GM18951 (cell line): ENCODE measurements at regions of chr14 and their contacts with region 1.

Region 1: DNA sequence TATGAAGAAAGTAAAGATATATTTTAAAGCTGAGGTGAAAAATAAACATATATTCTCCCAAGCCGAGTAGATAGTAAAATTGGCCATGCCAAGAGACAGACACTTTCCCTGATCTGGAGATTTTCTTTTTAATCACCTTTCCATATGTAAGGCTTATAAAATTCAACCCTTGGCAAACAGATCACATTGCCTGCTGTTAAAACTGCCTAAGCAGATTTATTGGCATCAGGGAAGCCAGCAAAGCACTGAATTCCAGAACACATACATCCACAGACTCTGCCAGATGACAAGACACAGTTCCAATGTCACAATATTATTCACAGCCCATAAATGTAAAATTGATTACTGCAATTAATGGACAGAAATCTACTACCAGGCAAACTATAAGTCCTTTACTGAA is 78.2 kb upstream of the GARIN2 start:
- POLR2A ChIP-seq: no peak

Region 2: DNA sequence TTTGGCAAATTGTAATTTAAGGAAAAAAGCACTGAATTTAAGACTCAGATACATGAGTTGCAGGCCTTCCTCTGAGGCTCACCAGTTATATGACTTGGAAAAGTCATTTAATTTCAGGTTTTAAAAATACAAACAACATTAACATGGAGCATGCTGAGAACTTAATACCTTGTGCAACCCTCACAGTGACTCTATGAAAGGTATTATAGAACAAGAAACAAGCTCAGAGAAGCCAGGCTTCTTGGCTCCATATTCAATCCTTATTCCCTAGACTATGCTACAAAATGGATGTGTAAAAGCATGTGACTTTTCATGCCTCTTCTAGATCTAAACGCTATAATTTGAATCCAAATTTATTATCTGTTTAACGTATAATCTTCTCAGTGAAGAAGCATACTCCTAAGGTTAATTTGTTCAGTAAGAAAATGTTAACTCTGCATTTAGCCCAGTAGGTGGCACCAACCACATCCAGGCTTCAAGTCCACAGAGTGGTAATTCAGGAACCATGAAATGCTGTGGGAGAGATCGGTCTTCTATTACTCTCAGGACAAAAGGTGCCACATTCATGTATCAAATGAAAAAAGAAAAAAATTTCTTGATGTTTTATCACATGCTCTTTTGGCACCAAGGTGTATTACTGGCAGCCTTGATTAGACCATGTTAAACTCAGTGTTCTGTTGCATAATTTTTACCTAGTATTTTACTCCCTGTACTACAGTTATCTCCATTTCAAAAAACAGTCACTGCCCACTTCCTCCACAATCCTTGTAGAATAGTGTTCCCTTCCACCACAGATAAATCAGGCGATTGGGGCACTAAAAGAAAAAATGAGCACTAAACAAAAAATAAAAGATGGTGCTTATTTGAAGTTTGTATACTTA is 615.6 kb before region 1 on chr14:
- in situ Hi-C with region 1: loop called (anchors 25 kb)
- POLR2A ChIP-seq: no peak